ENCODE measurements at regions of chr5 and their contacts with region 1.

Region 1: GRCh38 chr5:58460732-58461286 is 923 bp upstream of the PLK2 start:
- DNase-seq: peak; percentile 81
- CTCF ChIP-seq: peak; percentile 88

Region 2: DNA sequence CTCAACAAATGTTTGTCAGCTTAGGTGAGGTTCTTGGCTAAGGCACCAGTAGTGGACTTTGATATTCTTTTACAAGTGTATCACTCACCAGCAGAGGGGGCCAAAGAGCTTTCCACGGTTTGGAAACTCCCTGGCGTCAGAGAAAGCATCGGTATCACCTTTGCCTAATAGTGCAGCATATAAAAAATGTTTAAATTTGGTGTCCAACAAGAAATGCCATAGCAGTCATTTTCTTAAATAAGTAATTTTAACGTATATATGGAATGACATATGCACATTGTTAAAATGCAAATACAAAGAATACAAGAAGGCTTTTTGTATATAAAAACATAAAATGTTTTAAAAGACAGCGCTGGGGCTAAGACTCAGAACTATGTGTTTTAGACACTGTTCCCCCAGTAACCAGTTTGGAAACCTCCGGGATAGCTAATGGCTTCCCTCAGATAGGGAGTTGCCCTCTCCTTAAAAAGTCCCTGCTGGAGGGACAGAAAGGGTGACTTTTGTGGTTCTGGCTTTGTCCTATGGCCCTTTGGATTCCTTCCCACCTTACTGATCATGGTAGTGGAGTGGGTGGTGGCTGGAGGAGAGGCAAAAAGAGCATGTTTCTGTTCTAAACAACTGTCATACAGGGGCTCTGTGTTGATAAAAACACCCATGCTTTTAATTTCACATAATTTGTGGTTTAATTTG is 1162.4 kb before region 1 on chr5:
- CTCF ChIA-PET with region 1: interaction called, 98 read pairs
- POLR2A ChIA-PET with region 1: no interaction called
- DNase-seq: peak; percentile 54
- CTCF ChIP-seq: peak; percentile 75

Region 3: GRCh38 chr5:57499262-57500050 is 961.4 kb before region 1 on chr5:
- CTCF ChIA-PET with region 1: interaction called, 11 read pairs
- POLR2A ChIA-PET with region 1: no interaction called
- DNase-seq: peak; percentile 41
- CTCF ChIP-seq: peak; percentile 58

Region 4: DNA sequence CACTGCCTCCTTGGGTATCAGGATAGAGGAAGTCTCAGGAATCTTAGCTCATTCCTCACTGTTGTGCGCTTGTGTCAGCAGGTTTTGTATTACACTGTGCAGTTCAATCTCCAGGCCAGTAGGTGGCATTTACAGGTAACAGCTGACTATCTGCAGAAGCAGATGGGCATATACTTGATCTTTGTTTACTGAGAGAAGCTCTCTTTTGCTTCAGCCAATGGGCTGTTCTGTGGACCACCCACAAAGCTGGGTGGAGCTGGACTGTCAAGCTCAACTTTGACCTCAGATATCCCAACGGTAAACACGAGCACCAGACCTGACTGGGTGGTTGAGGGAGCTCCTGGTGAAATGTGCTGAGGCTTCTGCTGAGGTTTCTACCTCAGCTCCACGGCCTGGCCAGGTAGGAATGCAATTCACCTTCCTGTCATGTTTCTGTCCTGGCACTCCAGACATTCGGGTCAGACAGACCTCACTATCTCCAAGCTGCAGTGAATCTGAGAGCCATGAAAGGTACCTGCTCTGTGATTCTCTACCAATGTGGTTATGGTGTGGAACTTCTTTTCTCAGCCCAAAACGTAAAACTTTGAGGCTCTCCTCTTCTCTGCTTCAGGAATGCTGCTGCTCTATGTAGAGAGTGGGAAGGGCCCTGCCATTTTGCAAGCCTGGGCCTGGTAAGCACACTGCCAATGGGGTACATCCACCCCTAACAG is 810.3 kb before region 1 on chr5:
- CTCF ChIA-PET with region 1: interaction called, 20 read pairs
- POLR2A ChIA-PET with region 1: no interaction called
- DNase-seq: peak; percentile 10
- CTCF ChIP-seq: peak; percentile 80

Region 5: DNA sequence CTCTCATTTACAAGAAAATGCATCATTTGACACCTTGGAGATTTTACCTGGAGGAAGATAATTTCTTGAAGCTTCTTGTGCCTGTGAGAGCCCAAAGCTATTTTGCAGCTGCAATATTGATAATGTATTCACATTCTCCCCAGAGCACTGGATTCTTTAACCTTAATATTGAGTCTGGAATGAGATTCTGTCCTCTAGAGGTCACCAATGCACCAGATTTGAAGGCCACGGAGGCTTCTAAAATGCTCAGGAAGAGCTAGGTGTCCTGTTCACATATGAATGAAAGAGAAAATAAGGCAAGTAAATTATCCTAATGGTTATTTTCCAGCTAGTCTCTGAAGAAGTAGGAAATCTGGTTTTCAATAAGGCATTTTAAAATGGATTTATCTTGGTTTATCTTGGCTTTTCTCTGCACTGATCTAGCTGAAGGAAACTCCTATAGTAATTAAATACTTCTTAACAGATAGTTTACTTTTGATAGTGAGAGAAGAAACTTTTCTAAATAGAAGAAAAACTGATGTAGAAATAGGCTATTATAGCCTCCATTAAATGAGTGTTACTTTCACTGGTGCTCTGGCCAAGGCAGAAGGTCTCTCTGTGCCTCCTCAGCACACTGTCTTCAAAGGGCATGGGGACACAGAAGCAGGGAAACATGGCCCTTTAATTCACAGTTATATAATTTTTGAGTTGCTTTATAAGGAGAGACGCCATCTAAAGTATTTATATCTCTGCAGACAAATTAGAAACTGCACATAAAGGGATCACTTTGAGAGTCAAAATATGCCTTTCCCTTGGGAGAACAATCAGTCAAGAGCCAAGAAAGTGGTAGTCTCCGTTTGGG is 681.2 kb before region 1 on chr5:
- CTCF ChIA-PET with region 1: interaction called, 68 read pairs
- POLR2A ChIA-PET with region 1: no interaction called
- DNase-seq: no peak
- CTCF ChIP-seq: peak; percentile 40

Region 6: DNA sequence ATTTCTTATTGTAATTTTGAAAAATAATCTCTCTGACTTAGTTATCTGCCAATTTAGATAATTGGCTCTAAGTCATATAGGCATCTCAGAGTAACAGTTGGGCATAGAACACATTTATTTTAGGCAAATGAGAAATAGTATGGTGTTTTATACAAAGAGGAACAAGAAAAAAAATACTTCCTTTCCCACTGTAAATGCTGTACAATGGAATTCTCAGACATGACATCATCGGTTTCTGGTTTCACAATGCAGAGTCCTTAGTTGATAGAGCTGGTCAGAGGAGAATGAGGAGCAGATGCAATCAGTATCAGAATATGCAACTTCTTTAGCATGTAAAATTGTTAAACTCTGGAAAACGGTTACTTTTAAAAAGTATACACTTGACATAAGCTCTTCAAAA is 50.4 kb before region 1 on chr5:
- CTCF ChIA-PET with region 1: no interaction called
- POLR2A ChIA-PET with region 1: no interaction called
- DNase-seq: no peak
- CTCF ChIP-seq: no peak

Region 7: GRCh38 chr5:58447226-58447625 is 13.6 kb before region 1 on chr5:
- CTCF ChIA-PET with region 1: interaction called, 10 read pairs
- POLR2A ChIA-PET with region 1: no interaction called
- DNase-seq: no peak
- CTCF ChIP-seq: no peak

Measured in GM10248 (cell line).